Endothelial cell of umbilical vein (primary cell): ENCODE measurements at regions of chr7 and their contacts with region 1.

Region 1: DNA sequence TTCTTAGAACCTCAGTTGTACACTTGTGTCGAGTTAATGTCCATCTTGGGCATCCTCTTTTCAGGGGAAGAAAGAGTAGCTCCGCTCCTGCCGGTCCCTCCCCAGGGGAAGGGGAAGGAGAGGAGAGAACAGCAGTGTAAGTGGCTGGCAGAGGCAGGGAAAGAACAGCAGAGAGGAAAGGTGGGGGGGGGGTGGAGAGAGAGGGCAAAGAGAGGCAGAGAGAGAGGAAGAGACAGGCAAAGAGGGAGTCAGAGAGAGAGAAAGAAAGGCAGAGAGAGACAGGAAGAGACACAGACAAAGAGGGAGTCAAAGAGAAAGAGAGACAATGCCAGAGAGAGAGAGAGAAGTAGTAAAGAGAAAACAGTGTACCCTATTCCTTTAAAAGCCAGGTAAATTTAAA is 53.9 kb downstream of the MRPS24 start:
- DNase-seq: no peak
- H3K4me3 ChIP-seq: no peak overlapping the region
- H3K27ac ChIP-seq: no peak overlapping the region
- H3K4me1 ChIP-seq: no peaks in the 10 kb centered on the region
- H3K27me3 ChIP-seq: peaks cover 11 to 12% of the 10 kb centered on the region in 2 experiments
- CTCF ChIP-seq: no peak
- POLR2A ChIP-seq: no peak

Region 2: GRCh38 chr7:43729214-43729923 is 86.0 kb before region 1 on chr7 and contains the start of gene COA1:
- CTCF ChIA-PET with region 1: no interaction called
- POLR2A ChIA-PET with region 1: no interaction called
- dilution Hi-C with region 1: no loop called
- intact Hi-C with region 1: loop called (anchors 5 kb)
- DNase-seq: peak; percentile 93
- H3K4me3 ChIP-seq: peak within 1 kb of the TSS; percentile 13 to 66 (median 58)
- H3K27ac ChIP-seq: peak within 1 kb of the TSS; percentile 48
- H3K4me1 ChIP-seq: peaks cover 14% of the 10 kb centered on the region
- H3K27me3 ChIP-seq: peaks cover 0 to 3% of the 10 kb centered on the region in 2 experiments
- CTCF ChIP-seq: no peak
- POLR2A ChIP-seq: peak; percentile 86
- total RNA-seq, gene COA1: 55.1 and 58.0 TPM in 2 replicates